MCF 10A (cell line): ENCODE measurements at regions of chr9 and their contacts with region 1.

Region 1: GRCh38 chr9:69919461-69920061 is 98.9 kb downstream of the CFAP95 start:
- DNase-seq: peak; percentile 66
- H3K4me3 Mint-ChIP-seq: no peak overlapping the region
- H3K27ac Mint-ChIP-seq: no peak overlapping the region
- H3K4me1 Mint-ChIP-seq: no peaks in the 10 kb centered on the region
- H3K27me3 Mint-ChIP-seq: peaks cover 27% of the 10 kb centered on the region
- CTCF ChIP-seq: peak; percentile 57

Region 2: DNA sequence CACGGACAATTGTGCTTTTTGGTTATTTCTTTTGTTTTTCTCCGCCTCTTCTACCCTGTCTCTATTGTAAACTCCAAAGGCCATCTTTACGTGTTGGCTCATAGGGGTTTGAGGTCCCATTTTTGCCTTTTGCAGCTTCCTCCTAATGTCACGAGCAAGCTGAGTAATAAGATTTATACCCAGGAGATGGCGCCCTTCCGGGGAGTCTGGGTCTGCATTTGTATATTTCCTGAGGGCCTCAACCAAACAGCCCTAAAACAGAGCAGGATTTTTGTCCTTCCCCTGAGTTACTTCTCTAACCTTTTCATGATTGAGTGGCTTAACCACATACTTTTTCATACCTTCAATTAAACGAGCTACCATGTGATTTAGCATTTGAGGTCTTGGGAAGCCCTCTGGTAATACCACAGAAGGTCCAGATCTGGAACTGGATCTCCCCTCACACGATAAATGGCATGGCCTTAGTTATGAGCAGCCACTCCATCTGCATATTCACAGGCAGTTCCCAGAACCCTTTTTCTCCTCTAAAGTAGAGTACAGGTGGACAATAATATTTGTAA is 110.2 kb before region 1 on chr9:
- CTCF ChIA-PET with region 1: no interaction called
- POLR2A ChIA-PET with region 1: no interaction called
- intact Hi-C with region 1: loop called (anchors 5 kb)
- DNase-seq: peak; percentile 40
- H3K4me3 Mint-ChIP-seq: no peak overlapping the region
- H3K27ac Mint-ChIP-seq: no peak overlapping the region
- H3K4me1 Mint-ChIP-seq: no peaks in the 10 kb centered on the region
- H3K27me3 Mint-ChIP-seq: peaks cover 16% of the 10 kb centered on the region
- CTCF ChIP-seq: no peak

Region 3: DNA sequence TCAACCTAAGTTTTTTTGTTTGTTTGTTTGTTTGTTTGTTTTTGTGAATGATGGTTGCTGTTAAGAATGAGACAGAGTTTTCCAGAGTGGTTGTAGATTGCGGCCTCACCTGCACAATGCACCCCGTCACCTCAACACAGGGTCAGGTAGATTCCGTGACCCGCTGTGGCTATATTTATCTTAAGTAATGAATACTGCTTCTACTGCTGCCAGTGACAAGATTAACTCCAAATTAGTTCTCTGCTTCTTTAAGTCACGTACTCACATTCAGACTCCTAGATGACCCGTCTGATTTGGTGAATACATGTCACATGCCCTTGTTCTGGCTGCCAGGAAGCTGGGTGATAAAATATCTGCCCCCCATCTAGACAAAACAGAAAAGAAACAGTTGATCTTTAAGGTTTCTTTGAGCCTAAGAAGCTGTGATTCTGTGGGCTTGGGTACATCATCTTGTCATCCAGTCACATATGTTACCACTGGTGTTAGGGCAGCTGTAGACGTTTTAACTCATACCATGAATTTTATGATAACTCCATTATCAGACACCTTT is 46.1 kb before region 1 on chr9:
- CTCF ChIA-PET with region 1: no interaction called
- POLR2A ChIA-PET with region 1: no interaction called
- intact Hi-C with region 1: no loop called
- DNase-seq: no peak
- H3K4me3 Mint-ChIP-seq: no peak overlapping the region
- H3K27ac Mint-ChIP-seq: no peak overlapping the region
- H3K4me1 Mint-ChIP-seq: peaks cover 7% of the 10 kb centered on the region
- H3K27me3 Mint-ChIP-seq: no peaks in the 10 kb centered on the region
- CTCF ChIP-seq: no peak

Region 4: GRCh38 chr9:69898714-69899209 is 20.8 kb before region 1 on chr9:
- CTCF ChIA-PET with region 1: interaction called, 14 read pairs
- POLR2A ChIA-PET with region 1: interaction called, 3 read pairs
- intact Hi-C with region 1: no loop called
- DNase-seq: peak; percentile 77
- H3K4me3 Mint-ChIP-seq: no peak overlapping the region
- H3K27ac Mint-ChIP-seq: no peak overlapping the region
- H3K4me1 Mint-ChIP-seq: peaks cover 16% of the 10 kb centered on the region
- H3K27me3 Mint-ChIP-seq: no peaks in the 10 kb centered on the region
- CTCF ChIP-seq: no peak

Region 5: GRCh38 chr9:69932901-69933300 is 13.3 kb after region 1 on chr9:
- CTCF ChIA-PET with region 1: interaction called, 56 read pairs
- POLR2A ChIA-PET with region 1: no interaction called
- intact Hi-C with region 1: no loop called
- DNase-seq: peak; percentile 62
- H3K4me3 Mint-ChIP-seq: no peak overlapping the region
- H3K27ac Mint-ChIP-seq: no peak overlapping the region
- H3K4me1 Mint-ChIP-seq: peaks cover 8% of the 10 kb centered on the region
- H3K27me3 Mint-ChIP-seq: peaks cover 1% of the 10 kb centered on the region
- CTCF ChIP-seq: peak; percentile 31